Right ventricle myocardium inferior (tissue), 1 donor: ENCODE measurements at regions of chr2 and their contacts with region 1.

Region 1: GRCh38 chr2:30362468-30363081 is 84.5 kb upstream of the LCLAT1 start:
- DNase-seq: no peak
- ATAC-seq: no peak

Region 2: DNA sequence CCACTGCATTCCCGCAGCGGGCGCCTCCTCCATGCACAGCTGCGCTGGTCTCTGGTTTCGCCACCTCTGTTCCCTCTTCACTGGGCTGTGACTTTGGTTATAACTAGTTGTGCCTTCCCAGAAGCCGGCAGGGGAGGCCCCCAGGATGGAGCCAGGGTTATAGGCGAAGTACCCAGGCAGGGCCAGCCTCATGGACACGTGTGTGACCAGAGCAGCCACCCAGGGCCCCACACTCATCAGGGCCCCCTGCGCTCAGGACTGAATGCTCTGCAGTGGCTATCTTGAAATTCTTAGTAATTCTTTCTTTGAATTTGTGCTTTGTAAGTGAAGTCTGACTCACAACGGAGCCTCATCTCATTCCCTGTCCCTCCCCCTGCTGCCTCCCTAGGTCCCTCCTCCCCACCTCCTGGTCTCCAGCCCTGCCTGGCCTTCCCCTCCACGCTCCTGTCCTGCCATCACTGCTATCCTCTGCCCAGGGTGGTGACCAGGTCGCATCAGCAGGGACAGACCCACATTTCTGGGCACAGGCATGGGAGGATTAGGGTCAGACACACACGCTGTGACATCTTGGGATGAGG is 169.4 kb before region 1 on chr2:
- intact Hi-C with region 1: no loop called
- DNase-seq: no peak
- ATAC-seq: no peak

Region 3: GRCh38 chr2:30404319-30404953 is 41.9 kb after region 1 on chr2:
- intact Hi-C with region 1: loop called (anchors 2 kb)
- DNase-seq: no peak
- ATAC-seq: peak; percentile 33

Region 4: GRCh38 chr2:30410217-30410616 is 47.6 kb after region 1 on chr2:
- intact Hi-C with region 1: loop called (anchors 2 kb)
- DNase-seq: no peak
- ATAC-seq: no peak

Region 5: DNA sequence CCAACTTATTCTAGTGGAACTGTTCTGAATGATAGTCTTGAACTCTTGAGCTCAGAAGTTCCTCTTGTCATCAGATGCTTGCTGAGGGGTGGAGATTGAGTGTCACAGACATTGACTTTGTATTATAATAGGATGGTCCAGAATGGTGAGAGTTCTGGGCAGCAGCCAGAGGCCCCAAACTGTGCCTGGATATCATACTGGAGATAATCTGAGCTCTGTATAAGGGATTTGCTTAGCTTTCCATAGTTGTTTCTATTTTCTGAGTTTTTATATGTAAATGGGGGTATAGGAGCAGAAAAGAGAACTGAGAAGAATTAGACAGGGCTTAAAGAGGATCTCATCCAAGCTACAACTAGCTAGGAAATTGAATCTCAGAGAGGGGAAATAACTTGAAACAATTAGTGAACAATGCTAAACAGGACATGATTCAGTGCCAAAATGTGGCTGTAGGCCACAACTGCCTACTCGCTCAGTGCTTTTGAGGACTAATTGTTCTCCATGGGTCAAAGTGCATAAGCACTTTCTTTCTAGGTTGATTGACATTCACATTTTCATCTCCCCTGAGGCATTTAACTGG is 74.4 kb after region 1 on chr2:
- intact Hi-C with region 1: loop called (anchors 2 kb)
- DNase-seq: no peak
- ATAC-seq: peak; percentile 34

Region 6: GRCh38 chr2:30511122-30512083 is 148.8 kb after region 1 on chr2:
- intact Hi-C with region 1: loop called (anchors 5 kb)
- DNase-seq: no peak
- ATAC-seq: peak; percentile 74

Region 7: DNA sequence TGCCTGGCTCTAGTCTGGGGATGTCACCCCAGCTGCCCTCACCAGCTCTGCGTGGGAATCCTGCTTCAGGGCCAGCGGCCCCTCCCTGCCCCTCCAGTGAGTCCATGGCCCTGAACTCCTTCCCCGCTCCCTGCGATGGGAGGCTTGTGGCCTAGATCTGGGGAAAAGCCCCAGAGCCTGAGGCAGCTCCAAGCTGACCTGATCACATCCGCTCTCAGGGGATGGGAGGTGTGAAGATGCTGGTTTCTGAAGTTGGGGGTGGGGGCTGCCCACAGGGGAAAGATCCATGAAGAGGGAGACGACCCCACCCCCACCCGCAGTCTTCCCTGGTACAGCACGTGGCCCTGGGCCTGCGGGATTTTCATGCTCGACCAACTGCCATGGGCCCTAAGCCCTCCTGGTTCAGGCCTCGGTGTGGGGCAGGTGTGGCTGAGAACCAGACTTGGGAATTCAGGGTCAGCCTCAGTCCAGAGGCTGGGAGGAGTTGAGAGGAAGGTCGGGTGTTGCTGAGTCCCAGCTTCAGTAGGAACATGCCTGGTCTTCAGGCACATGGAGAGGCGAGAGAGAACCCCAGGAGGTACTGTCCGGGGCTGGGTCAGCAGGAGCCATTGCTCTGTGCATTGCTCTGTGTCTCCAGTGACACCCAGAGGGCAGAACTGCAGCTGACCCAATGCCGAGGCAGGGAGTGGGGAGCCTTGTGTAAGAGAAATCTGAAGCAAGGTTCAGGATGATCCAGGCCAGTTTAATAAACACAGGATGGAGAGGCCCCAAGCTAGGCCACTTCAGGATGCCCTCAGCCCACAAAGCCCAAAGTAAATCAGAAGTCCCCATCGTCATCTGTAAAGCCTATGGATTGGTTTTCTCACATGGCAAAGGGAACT is 329.6 kb after region 1 on chr2:
- intact Hi-C with region 1: loop called (anchors 5 kb)
- DNase-seq: peak; percentile 65
- ATAC-seq: peak; percentile 49